ENCODE measurements at regions of chr17 and their contacts with region 1.

Region 1: GRCh38 chr17:75109407-75110233 is at the start of gene ARMC7:
- DNase-seq: no peak
- H3K4me3 ChIP-seq: peak within 1 kb of the TSS; percentile 79
- CTCF ChIP-seq: no peak

Region 2: GRCh38 chr17:74864866-74865395 is 244.7 kb before region 1 on chr17:
- CTCF ChIA-PET with region 1: no interaction called
- POLR2A ChIA-PET with region 1: no interaction called
- DNase-seq: no peak
- H3K4me3 ChIP-seq: no peak overlapping the region
- CTCF ChIP-seq: peak; percentile 92

Region 3: GRCh38 chr17:74961657-74962490 is 147.7 kb before region 1 on chr17:
- CTCF ChIA-PET with region 1: interaction called, 34 read pairs
- POLR2A ChIA-PET with region 1: no interaction called
- DNase-seq: peak; percentile 10
- H3K4me3 ChIP-seq: no peak overlapping the region
- CTCF ChIP-seq: peak; percentile 76

Region 4: DNA sequence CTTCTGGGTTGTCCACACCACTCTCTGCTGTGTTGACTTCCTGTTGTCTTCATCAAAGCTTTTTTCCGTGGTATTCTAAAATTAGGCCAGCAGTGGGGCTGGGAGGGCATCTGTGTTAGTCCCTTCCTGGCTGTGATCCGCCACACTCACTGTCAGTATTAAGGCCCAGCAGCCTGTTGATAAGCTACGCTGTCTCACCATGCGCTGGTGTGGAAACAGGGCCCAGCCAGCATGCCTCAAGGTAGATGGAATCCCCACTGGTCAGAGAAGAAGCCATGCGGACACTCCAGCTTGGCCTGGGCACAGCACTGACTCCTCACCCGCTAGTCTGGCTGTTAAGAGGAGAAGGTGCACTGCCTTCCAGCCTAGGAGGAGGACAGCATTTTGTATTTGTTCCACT is 110.8 kb before region 1 on chr17:
- CTCF ChIA-PET with region 1: no interaction called
- POLR2A ChIA-PET with region 1: no interaction called
- DNase-seq: no peak
- H3K4me3 ChIP-seq: no peak overlapping the region
- CTCF ChIP-seq: no peak

Region 5: GRCh38 chr17:75024686-75025397 is 84.8 kb before region 1 on chr17:
- CTCF ChIA-PET with region 1: no interaction called
- POLR2A ChIA-PET with region 1: no interaction called
- DNase-seq: no peak
- H3K4me3 ChIP-seq: no peak overlapping the region
- CTCF ChIP-seq: no peak

Region 6: DNA sequence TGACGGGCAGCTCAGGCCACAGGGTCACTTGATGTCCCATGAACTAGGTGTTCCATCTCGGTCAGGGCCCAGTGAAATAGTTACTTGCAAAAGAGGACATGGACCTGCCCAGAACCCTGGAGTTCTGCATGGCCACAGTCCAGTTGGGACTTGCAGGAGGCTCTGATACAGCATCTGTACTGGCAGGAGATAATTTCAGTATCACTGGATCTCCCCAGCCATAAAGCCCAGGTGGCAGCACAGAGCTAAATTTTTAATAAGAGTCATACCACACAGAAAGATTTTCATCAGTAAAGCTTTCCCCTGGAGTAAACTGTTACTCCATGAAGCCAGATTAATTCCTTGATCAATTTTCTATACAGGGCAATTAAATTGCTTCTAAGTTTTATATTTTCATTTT is 39.8 kb before region 1 on chr17:
- CTCF ChIA-PET with region 1: interaction called, 146 read pairs
- POLR2A ChIA-PET with region 1: no interaction called
- DNase-seq: no peak
- H3K4me3 ChIP-seq: no peak overlapping the region
- CTCF ChIP-seq: peak; percentile 36

Region 7: DNA sequence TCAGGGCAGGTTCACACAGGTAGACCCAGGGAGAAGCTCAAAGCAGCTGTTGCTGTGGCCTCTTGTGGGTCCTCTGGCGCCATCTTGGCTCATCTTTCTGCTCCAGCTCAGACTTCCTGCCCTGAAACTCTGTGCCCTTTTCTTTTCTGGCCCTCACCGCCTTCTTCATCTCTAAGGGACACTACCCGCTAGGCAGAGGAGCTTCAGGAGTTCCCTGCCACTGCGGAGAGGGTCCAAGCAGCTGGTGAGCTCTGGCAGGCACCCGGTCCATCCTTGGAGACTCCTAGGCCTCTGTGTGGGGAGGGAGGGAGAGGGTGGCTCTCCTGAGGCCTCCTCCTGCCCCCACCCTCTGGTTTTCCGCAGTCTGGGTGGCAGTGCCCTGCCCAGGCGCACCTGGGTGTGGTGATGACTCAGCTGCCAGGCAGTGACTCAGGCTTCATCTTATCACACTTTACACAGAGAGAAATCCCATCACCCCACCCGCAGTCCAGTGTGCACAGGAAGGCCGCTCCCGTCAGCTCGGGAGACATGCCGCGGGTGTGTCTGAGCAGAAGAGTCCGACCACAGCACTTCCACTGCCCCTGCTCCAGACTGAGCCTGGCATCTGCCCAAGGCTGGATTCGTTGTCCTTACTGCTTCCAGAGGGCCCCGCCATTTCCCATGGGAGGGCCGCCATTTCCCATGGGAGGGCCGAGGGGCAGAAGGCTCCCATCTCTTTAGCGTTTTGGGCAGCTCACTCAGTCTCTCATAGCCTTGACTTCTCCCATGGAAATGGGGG is 14.6 kb after region 1 on chr17:
- CTCF ChIA-PET with region 1: interaction called, 142 read pairs
- POLR2A ChIA-PET with region 1: interaction called, 19 read pairs
- DNase-seq: no peak
- H3K4me3 ChIP-seq: no peak overlapping the region
- CTCF ChIP-seq: no peak

Region 8: DNA sequence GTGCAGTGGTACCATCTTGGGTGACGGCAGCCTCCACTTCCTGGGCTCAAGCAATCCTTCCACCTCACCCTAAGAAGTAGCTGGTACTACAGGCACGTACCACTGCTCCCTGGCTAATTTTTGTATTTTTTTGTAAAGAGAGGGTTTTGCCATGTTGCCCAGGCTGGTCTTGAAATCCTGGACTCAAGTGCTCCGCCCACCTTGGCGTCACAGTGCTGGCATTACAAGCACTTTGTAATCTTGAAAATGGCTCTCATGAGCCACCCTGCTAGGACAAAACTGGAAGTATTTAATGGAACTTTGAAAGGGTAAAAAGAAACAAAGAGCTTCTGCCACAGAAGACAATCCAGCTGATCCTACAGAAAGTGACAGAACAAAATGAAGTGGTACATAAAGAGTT is 63.9 kb after region 1 on chr17:
- CTCF ChIA-PET with region 1: interaction called, 67 read pairs
- POLR2A ChIA-PET with region 1: no interaction called
- DNase-seq: no peak
- H3K4me3 ChIP-seq: no peak overlapping the region
- CTCF ChIP-seq: no peak

Region 9: DNA sequence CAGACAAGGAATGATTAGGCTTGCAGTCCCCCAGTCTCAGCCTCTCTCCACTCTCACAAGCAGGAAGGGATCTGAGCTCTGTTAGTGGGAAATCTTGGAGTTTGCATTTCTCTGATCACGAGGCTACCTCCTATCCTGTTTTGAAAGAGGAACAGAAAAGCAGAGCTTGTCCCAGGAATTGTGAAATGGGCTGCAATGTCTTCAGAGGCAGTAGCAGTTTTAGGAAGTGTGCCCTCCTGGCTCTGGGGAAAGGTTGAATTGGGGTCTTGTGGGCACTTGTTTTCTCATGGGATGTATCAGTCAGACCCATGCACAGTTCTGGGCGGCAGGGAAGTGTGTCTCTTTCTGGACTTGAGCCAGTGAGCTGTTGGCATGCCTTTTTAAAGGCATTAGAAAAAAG is 118.7 kb after region 1 on chr17:
- CTCF ChIA-PET with region 1: interaction called, 20 read pairs
- POLR2A ChIA-PET with region 1: interaction called, 3 read pairs
- DNase-seq: no peak
- H3K4me3 ChIP-seq: no peak overlapping the region
- CTCF ChIP-seq: no peak

Region 10: GRCh38 chr17:75393523-75394331 is 284.1 kb after region 1 on chr17:
- CTCF ChIA-PET with region 1: no interaction called
- POLR2A ChIA-PET with region 1: no interaction called
- DNase-seq: peak; percentile 93
- H3K4me3 ChIP-seq: peak overlapping the region; percentile 88
- CTCF ChIP-seq: no peak

Measured in AG04449 (cell line).